ENCODE measurements at regions of chr14 and their contacts with region 1.

Region 1: GRCh38 chr14:67695394-67695949 is at the start of gene RDH11:
- DNase-seq: peak; percentile 89
- H3K4me3 ChIP-seq: peak within 1 kb of the TSS; percentile 96
- H3K27ac ChIP-seq: peak within 1 kb of the TSS; percentile 58
- H3K4me1 ChIP-seq: peaks cover 5% of the 10 kb centered on the region
- CTCF ChIP-seq: no peak
- total RNA-seq, gene RDH11: 31.1 and 32.0 TPM in 2 replicates

Region 2: GRCh38 chr14:67674481-67675169 is 20.8 kb before region 1 on chr14 and contains the start of gene VTI1B:
- CTCF ChIA-PET with region 1: interaction called, 3 read pairs
- POLR2A ChIA-PET with region 1: no interaction called
- intact Hi-C with region 1: loop called (anchors 2 kb)
- DNase-seq: peak; percentile 84
- H3K4me3 ChIP-seq: peak within 1 kb of the TSS; percentile 82
- H3K27ac ChIP-seq: peak within 1 kb of the TSS; percentile 53
- H3K4me1 ChIP-seq: peaks cover 20% of the 10 kb centered on the region
- CTCF ChIP-seq: no peak
- total RNA-seq, gene VTI1B: 41.5 and 50.5 TPM in 2 replicates

Measured in OCI-LY7 (cell line).